H1 (cell line): ENCODE measurements at regions of chr11 and their contacts with region 1.

Region 1: DNA sequence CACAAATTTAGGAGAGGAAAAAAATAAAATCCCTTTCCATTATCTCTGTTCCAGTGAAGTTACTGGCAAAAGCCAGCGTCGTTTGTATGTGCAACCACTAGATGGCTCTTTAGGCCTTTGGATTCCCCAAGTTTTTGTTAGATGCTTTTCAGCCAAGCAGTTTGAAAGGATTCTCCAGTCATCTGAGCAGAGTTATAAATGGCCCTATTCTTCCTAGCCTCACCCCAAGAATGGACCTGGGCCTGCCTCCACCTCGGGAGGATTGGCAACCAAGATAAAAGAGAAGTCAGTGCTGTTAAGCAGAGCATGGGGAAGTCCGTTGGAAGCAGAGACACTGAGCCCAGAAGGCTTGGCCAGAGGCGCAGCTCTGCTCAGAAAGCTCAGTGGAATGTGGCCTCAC is 15.4 kb downstream of the FAM181B start:
- DNase-seq: peak in 1 of 2 experiments; percentile 54
- H3K4me3 ChIP-seq: no peak overlapping the region
- H3K27ac ChIP-seq: no peak overlapping the region
- H3K4me1 ChIP-seq: no peaks in the 10 kb centered on the region; a peak in 1 of 7 replicates
- H3K27me3 ChIP-seq: no peaks in the 10 kb centered on the region
- CTCF ChIP-seq: peak in 2 of 3 experiments; percentile 76 to 80; a peak in 3 of 4 replicates
- EP300 ChIP-seq: no peak
- POLR2A ChIP-seq: no peak
- RAD21 ChIP-seq: peak; percentile 79 to 87

Region 2: GRCh38 chr11:82733444-82734119 is 15.3 kb after region 1 on chr11 and contains the start of gene FAM181B:
- CTCF ChIA-PET with region 1: interaction called, 18 read pairs
- POLR2A ChIA-PET with region 1: no interaction called
- DNase-seq: peak; percentile 71 to 85
- H3K4me3 ChIP-seq: peak within 1 kb of the TSS; percentile 50 to 86 (median 58)
- H3K27ac ChIP-seq: no peak within 1 kb of the TSS
- H3K4me1 ChIP-seq: peaks cover 2 to 15% (median 6%) of the 10 kb centered on the region in 4 experiments; a peak in 5 of 7 replicates
- H3K27me3 ChIP-seq: peaks cover 11 to 41% (median 36%) of the 10 kb centered on the region in 4 experiments
- CTCF ChIP-seq: no peak
- EP300 ChIP-seq: 0 out of 3 replicates have a peak, but pooled peaks of 1 of the 2 experiments have one; percentile 24
- POLR2A ChIP-seq: no peak
- RAD21 ChIP-seq: no peak
- total RNA-seq, gene FAM181B: 0.37 and 0.42 TPM in 2 replicates

Region 3: DNA sequence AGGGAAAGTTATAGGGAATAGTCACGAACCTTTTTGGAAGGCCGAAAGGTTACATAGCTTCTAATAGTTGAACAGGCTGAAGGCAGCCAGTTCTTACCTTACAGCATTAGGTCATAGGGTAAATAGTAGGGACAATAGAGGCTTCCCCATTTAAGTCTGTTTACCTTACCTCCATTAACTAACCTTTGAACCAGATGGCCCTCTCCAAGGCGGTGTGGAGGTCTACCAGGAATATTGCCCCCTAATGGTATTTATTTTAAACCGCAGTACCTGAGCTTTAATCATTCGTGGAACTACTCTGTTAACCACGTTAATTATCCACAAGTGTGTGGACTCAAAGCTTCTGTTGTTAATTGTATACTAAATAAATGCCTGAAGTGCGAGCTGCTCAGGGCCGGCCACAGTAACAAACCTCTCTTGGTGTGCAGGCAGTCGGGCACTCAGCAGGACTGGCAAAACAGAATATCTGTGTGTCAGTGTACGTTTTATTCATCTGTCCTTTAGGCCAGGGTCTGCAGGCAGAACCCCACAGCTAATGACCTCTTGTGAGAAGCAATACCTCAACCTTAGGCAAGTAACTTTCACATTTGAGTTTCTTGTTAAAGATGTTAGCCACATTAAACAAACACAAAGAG is 100.2 kb after region 1 on chr11:
- CTCF ChIA-PET with region 1: interaction called, 18 read pairs
- POLR2A ChIA-PET with region 1: no interaction called
- DNase-seq: no peak
- H3K4me3 ChIP-seq: no peak overlapping the region
- H3K27ac ChIP-seq: no peak overlapping the region
- H3K4me1 ChIP-seq: peaks cover 2 to 4% (median 4%) of the 10 kb centered on the region in 4 experiments; a peak in 4 of 7 replicates
- H3K27me3 ChIP-seq: peaks cover 0 to 1% (median 0%) of the 10 kb centered on the region in 4 experiments; a peak in 1 of 7 replicates
- CTCF ChIP-seq: peak in 1 of 3 experiments; percentile 30; a peak in 1 of 4 replicates
- EP300 ChIP-seq: no peak
- POLR2A ChIP-seq: no peak
- RAD21 ChIP-seq: peak in 1 of 2 experiments; percentile 27; a peak in 1 of 4 replicates

Region 4: GRCh38 chr11:82874646-82875523 is 156.6 kb after region 1 on chr11:
- CTCF ChIA-PET with region 1: no interaction called
- POLR2A ChIA-PET with region 1: no interaction called
- DNase-seq: no peak
- H3K4me3 ChIP-seq: no peak overlapping the region
- H3K27ac ChIP-seq: no peak overlapping the region; the same call in 1 of the 2 replicates
- H3K4me1 ChIP-seq: peaks cover 2 to 5% (median 3%) of the 10 kb centered on the region in 4 experiments; a peak in 3 of 7 replicates
- H3K27me3 ChIP-seq: no peaks in the 10 kb centered on the region
- CTCF ChIP-seq: no peak
- EP300 ChIP-seq: no peak
- POLR2A ChIP-seq: no peak
- RAD21 ChIP-seq: no peak